ENCODE measurements at regions of chrX and their contacts with region 1.

Region 1: GRCh38 chrX:86023811-86024210 is 23.5 kb downstream of the CHM start:
- DNase-seq: no peak
- H3K4me3 ChIP-seq: no peak overlapping the region
- H3K27ac ChIP-seq: no peak overlapping the region
- H3K4me1 ChIP-seq: no peaks in the 10 kb centered on the region
- H3K27me3 ChIP-seq: no peaks in the 10 kb centered on the region
- CTCF ChIP-seq: no peak
- POLR2A ChIP-seq: no peak

Region 2: DNA sequence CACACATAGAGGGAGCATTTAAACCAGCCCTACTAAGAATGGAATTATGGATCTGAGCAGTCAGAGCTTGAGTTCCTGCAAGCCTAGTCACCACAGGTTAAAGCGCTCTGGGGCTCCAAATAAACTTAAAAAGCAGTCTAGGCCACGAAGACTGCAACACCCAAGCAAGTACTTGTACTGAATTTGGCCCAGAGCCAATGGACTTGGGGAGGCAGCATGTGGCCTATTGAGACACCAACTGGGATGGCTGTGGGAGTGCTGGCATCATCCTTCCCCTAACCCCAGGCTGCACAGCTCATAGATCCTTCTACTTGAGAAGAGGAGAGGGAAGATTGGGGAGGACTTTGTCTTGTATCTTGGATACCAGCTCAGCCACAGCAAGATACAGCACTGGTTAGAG is 1724.4 kb before region 1 on chrX:
- intact Hi-C with region 1: loop called (anchors 10 kb)
- DNase-seq: no peak
- H3K4me3 ChIP-seq: no peak overlapping the region
- H3K27ac ChIP-seq: no peak overlapping the region
- H3K4me1 ChIP-seq: no peaks in the 10 kb centered on the region
- H3K27me3 ChIP-seq: peaks cover 0 to 4% of the 10 kb centered on the region in 2 donors
- CTCF ChIP-seq: no peak
- POLR2A ChIP-seq: no peak

Region 3: GRCh38 chrX:86047174-86047935 is 23.5 kb after region 1 on chrX and contains the start of gene CHM:
- intact Hi-C with region 1: no loop called
- DNase-seq: peak in 1 of 2 donors; percentile 68
- H3K4me3 ChIP-seq: peak within 1 kb of the TSS; percentile 50 to 68 (median 51)
- H3K27ac ChIP-seq: peak within 1 kb of the TSS; percentile 87 to 89
- H3K4me1 ChIP-seq: no peaks in the 10 kb centered on the region
- H3K27me3 ChIP-seq: peaks cover 0 to 18% of the 10 kb centered on the region in 2 donors
- CTCF ChIP-seq: no peak
- POLR2A ChIP-seq: no peak
- total RNA-seq, gene CHM: 18.4 to 37.2 (median 22.9) TPM

Region 4: GRCh38 chrX:86078650-86079049 is 54.8 kb after region 1 on chrX:
- intact Hi-C with region 1: no loop called
- DNase-seq: no peak
- H3K4me3 ChIP-seq: no peak overlapping the region
- H3K27ac ChIP-seq: no peak overlapping the region
- H3K4me1 ChIP-seq: no peaks in the 10 kb centered on the region
- H3K27me3 ChIP-seq: peaks cover 0 to 15% of the 10 kb centered on the region in 2 donors
- CTCF ChIP-seq: no peak
- POLR2A ChIP-seq: no peak